ENCODE measurements at regions of chr4 and their contacts with region 1.

Region 1: GRCh38 chr4:113695328-113696169 is 66.0 kb downstream of the CAMK2D start:
- DNase-seq: no peak
- ATAC-seq: no peak
- H3K4me3 ChIP-seq: no peak overlapping the region
- H3K4me3 Mint-ChIP-seq: no peak overlapping the region
- H3K27ac ChIP-seq: no peak overlapping the region
- H3K27ac Mint-ChIP-seq: no peak overlapping the region
- H3K4me1 ChIP-seq: peaks cover 10% of the 10 kb centered on the region
- H3K4me1 Mint-ChIP-seq: peaks cover 33% of the 10 kb centered on the region
- H3K27me3 ChIP-seq: no peaks in the 10 kb centered on the region
- H3K27me3 Mint-ChIP-seq: no peaks in the 10 kb centered on the region
- CTCF ChIP-seq: no peak

Region 2: DNA sequence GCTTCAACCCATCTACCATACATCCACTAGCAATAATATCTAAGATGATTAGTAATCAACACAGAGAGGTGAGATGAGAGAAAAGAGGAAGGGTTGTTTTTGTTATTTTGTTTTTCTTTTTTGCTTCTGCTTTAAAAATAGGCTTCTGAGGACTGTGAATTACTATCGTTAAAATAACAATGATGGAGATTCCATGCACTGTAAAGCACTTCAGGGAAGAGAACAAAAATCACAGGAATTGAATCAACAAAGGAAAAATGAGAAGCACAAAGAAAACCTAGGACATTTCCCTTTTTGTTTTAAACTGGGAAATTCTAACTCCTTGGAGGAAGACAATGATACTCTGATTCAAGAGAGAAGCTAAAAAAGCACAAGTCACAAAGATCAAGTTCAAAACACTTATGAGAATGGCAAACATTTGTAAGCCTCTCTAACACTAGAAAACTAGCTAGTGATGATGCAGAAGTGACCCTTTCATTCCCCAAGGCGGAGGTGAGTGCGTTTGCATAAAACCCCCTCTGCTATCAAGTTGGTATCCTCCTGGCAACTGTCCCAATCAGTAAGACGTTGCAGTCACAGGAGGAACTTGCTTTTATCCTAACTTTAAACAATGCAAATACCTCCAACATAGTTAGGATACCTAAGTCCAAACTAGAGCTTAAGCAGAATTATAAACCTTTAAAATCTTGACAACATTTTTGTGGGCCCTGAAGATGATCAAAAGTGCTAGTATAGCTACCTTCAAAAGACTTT is 242.5 kb before region 1 on chr4:
- CTCF ChIA-PET with region 1: no interaction called
- POLR2A ChIA-PET with region 1: no interaction called
- intact Hi-C with region 1: loop called in 1 of 2 experiments (anchors 5 kb)
- DNase-seq: peak in 1 of 9 experiments; percentile 3
- ATAC-seq: no peak
- H3K4me3 ChIP-seq: no peak overlapping the region
- H3K4me3 Mint-ChIP-seq: no peak overlapping the region
- H3K27ac ChIP-seq: no peak overlapping the region
- H3K27ac Mint-ChIP-seq: peak overlapping the region; percentile 5
- H3K4me1 ChIP-seq: no peaks in the 10 kb centered on the region
- H3K4me1 Mint-ChIP-seq: no peaks in the 10 kb centered on the region
- H3K27me3 ChIP-seq: no peaks in the 10 kb centered on the region
- H3K27me3 Mint-ChIP-seq: no peaks in the 10 kb centered on the region
- CTCF ChIP-seq: no peak

Region 3: DNA sequence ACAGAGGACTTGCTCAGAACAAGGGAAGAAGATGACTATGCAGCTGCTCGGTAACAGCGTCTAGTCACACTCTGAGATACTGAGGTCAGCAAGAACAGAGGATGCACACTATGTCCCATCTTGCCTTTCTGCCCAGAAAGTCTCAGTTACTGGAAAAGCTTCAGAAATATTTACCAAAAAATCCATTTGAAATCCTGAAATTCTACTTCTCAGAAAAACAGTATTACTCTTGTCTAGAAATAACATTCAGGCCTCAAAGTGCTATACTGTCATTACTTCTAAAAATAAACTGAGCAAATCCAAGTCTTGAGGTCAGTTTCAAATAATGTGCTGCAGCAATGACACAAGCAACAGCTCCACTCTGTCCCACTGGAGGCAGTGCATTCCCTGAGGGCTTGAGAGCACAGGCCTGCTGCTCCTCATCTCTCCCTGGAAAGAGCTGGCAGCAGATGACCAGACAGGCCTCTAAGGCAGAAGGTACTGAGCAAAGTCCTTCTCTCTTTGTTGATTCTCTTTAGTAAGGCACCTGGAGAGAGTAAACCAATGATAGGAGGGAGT is 10.9 kb before region 1 on chr4:
- CTCF ChIA-PET with region 1: interaction called, 3 read pairs
- POLR2A ChIA-PET with region 1: interaction called, 4 read pairs
- intact Hi-C with region 1: loop called in 1 of 2 experiments (anchors 2 kb)
- DNase-seq: peak in 2 of 9 experiments; percentile 8 to 17
- ATAC-seq: no peak
- H3K4me3 ChIP-seq: no peak overlapping the region
- H3K4me3 Mint-ChIP-seq: no peak overlapping the region
- H3K27ac ChIP-seq: peak overlapping the region in 1 of 2 experiments; percentile 7
- H3K27ac Mint-ChIP-seq: peak overlapping the region; percentile 87
- H3K4me1 ChIP-seq: peaks cover 37% of the 10 kb centered on the region
- H3K4me1 Mint-ChIP-seq: peaks cover 53% of the 10 kb centered on the region
- H3K27me3 ChIP-seq: no peaks in the 10 kb centered on the region
- H3K27me3 Mint-ChIP-seq: no peaks in the 10 kb centered on the region
- CTCF ChIP-seq: no peak